CD4-positive, alpha-beta memory T cell (primary cell): ENCODE measurements at regions of chr1 and their contacts with region 1.

Region 1: DNA sequence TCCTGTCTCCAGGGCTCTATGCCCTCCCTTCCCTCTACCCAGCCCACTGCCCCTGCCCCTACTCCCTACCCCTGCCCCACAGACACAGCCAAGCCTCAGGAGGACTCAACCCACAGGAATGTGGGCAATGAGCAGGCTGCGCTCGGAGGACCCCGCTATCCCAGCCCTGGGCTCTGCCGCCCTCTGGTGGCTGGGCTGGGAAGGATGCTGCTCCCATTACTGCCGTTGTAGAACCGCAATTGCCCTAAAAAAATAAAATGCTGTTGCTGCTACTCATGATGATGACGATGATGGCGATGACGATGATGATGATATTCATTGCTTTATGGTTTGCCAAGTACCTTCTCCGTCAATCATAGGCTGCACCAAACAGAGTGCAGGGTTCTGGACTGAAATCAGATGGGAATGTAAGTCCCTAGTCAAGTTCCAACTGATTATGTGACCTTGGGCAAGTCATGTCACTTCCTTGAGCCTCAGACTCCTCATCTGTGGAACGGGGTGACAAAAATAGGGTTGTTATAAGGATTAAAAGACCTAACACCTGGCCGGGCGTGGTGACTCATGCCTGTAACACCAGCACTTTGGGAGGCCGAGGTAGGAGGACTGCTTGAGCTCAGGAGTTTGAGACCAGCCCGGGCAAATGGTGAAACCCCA is 24.6 kb downstream of the ARHGEF19 start:
- DNase-seq: peak; percentile 63 to 79 (median 71)
- H3K4me3 ChIP-seq: no peak overlapping the region
- H3K4me3 Mint-ChIP-seq: no peak overlapping the region
- H3K27ac ChIP-seq: no peak overlapping the region
- H3K27ac Mint-ChIP-seq: no peak overlapping the region
- H3K4me1 ChIP-seq: peaks cover 5% of the 10 kb centered on the region
- H3K4me1 Mint-ChIP-seq: peaks cover 2 to 4% (median 3%) of the 10 kb centered on the region in 4 donors
- H3K27me3 ChIP-seq: no peaks in the 10 kb centered on the region
- H3K27me3 Mint-ChIP-seq: peaks cover 8 to 10% of the 10 kb centered on the region in 2 donors

Region 2: DNA sequence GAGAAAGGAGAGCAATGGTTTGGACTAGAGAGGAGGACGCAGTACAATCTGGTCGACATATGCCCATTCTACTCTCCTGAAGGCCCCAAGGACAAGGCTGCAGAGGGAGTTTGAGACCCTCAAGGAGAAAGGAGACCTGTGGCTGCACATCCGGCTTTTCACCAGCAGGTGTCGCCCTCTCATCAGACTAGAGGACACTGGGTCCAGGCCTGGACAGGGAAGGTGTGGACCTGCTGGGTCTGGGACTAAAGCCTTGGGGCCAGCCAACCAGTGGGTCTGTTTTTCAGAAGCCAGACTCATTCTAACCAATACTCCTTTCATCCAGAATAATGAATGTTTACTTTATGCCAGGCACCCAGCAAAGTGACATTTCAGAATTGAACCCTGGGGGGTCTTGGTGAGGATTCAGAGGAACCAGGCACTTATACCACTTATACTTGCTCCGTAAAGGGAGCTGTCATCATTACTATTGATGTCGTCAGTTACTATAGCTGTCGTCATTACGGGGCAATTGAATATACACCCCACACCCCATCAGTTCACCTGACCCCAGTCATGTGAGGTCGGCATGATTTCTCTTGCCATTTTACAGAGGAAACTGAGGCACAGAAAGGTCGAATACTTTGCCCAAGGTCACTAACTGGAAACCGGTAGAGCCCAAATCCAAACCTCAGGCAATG is 178.7 kb before region 1 on chr1:
- CTCF ChIA-PET with region 1: interaction called, 7 read pairs
- POLR2A ChIA-PET with region 1: no interaction called
- intact Hi-C with region 1: loop called (anchors 1 kb)
- DNase-seq: peak; percentile 53 to 64 (median 59)
- H3K4me3 ChIP-seq: no peak overlapping the region
- H3K4me3 Mint-ChIP-seq: no peak overlapping the region
- H3K27ac ChIP-seq: no peak overlapping the region
- H3K27ac Mint-ChIP-seq: peak overlapping the region in 1 of 7 donors; percentile 64
- H3K4me1 ChIP-seq: peaks cover 13% of the 10 kb centered on the region
- H3K4me1 Mint-ChIP-seq: peaks cover 0 to 4% (median 4%) of the 10 kb centered on the region in 4 donors
- H3K27me3 ChIP-seq: no peaks in the 10 kb centered on the region
- H3K27me3 Mint-ChIP-seq: peaks cover 2 to 9% of the 10 kb centered on the region in 2 donors

Region 3: GRCh38 chr1:16078925-16079656 is 108.8 kb before region 1 on chr1:
- CTCF ChIA-PET with region 1: interaction called, 387 read pairs
- POLR2A ChIA-PET with region 1: interaction called, 10 read pairs
- intact Hi-C with region 1: loop called (anchors 1 kb)
- DNase-seq: peak; percentile 73 to 76 (median 75)
- H3K4me3 ChIP-seq: peak overlapping the region in 1 of 2 donors; percentile 7
- H3K4me3 Mint-ChIP-seq: peak overlapping the region; percentile 76 to 92 (median 84)
- H3K27ac ChIP-seq: no peak overlapping the region
- H3K27ac Mint-ChIP-seq: peak overlapping the region in 6 of 7 donors; percentile 31 to 91 (median 58)
- H3K4me1 ChIP-seq: peaks cover 14% of the 10 kb centered on the region
- H3K4me1 Mint-ChIP-seq: peaks cover 8 to 18% (median 12%) of the 10 kb centered on the region in 4 donors
- H3K27me3 ChIP-seq: peaks cover 3% of the 10 kb centered on the region
- H3K27me3 Mint-ChIP-seq: peaks cover 1 to 4% of the 10 kb centered on the region in 2 donors

Region 4: GRCh38 chr1:16243936-16244649 is 56.2 kb after region 1 on chr1:
- CTCF ChIA-PET with region 1: interaction called, 14 read pairs
- POLR2A ChIA-PET with region 1: no interaction called
- intact Hi-C with region 1: loop called (anchors 1 kb)
- DNase-seq: peak; percentile 65 to 73 (median 70)
- H3K4me3 ChIP-seq: no peak overlapping the region
- H3K4me3 Mint-ChIP-seq: no peak overlapping the region
- H3K27ac ChIP-seq: no peak overlapping the region
- H3K27ac Mint-ChIP-seq: peak overlapping the region in 4 of 7 donors; percentile 38 to 59 (median 46)
- H3K4me1 ChIP-seq: peaks cover 11% of the 10 kb centered on the region
- H3K4me1 Mint-ChIP-seq: peaks cover 3 to 6% (median 5%) of the 10 kb centered on the region in 4 donors
- H3K27me3 ChIP-seq: no peaks in the 10 kb centered on the region
- H3K27me3 Mint-ChIP-seq: no peaks in the 10 kb centered on the region